Activated T-helper 1 cell treated with anti-CD3 and anti-CD28 coated beads, Interleukin-12 subunit alpha, Interleukin-12 subunit beta, Interleukin-2, Interleukin-4 antibody, amounts not matched to agents 30 ng/mL and 10 ng/mL and 1 ng/mL, durations not matched to agents 14 hours and 24 hours and 36 hours (primary cell): ENCODE measurements at regions of chr16 and their contacts with region 1.

Region 1: GRCh38 chr16:24253192-24253591 is 2.9 kb upstream of the CACNG3 start:
- DNase-seq: peak; percentile 6
- H3K4me3 Mint-ChIP-seq: no peak overlapping the region
- H3K27ac Mint-ChIP-seq: no peak overlapping the region
- H3K4me1 Mint-ChIP-seq: no peaks in the 10 kb centered on the region
- H3K27me3 Mint-ChIP-seq: peaks cover 28% of the 10 kb centered on the region

Region 2: DNA sequence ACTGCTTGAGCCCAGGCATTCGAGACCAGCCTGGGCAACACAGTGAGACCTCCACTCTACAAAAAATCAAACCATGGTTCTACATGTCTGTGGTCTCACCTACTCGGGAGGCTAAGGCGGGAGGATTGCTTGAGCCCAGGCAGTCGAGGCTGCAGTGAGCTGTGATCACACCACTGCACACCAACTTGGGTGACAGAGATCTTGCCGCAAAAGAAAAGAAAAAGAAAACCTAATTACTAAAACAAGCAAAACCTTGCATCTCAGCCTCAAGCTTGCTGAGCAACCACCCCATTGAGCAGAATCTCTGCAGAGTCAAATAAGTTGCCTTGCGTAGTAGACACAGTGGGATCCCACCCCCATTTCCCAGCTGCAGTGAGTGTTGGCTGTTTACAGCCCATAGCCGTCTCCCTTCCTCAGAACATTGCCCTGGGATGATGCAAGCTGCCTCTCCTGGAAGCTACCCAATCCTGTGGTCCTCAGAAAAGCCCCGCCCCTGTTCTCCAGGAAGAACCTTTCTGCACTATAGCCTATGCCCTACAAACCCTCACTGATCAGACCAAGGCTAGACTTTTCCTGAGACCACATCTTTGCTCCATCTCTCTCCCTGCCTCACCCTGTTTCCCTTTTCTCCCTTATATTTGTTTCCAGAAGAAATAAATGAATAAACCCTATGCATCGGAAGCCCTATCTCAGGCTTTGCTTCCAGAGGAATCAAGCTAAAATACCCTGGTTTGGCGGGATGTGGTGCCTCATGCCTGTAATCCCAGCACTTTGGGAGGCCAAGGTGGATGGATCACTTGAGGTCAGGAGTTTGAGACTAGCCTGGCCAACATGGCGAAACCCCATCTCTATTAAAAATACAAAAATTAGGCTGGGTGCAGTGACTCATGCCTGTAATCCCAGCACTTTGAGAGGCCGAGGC is 523.4 kb before region 1 on chr16:
- intact Hi-C with region 1: loop called (anchors 10 kb)
- DNase-seq: no peak
- H3K4me3 Mint-ChIP-seq: no peak overlapping the region
- H3K27ac Mint-ChIP-seq: no peak overlapping the region
- H3K4me1 Mint-ChIP-seq: peaks cover 6% of the 10 kb centered on the region
- H3K27me3 Mint-ChIP-seq: peaks cover 19% of the 10 kb centered on the region

Region 3: GRCh38 chr16:24041826-24042631 is 211.2 kb before region 1 on chr16:
- intact Hi-C with region 1: loop called (anchors 1 kb)
- DNase-seq: peak; percentile 62
- H3K4me3 Mint-ChIP-seq: no peak overlapping the region
- H3K27ac Mint-ChIP-seq: no peak overlapping the region
- H3K4me1 Mint-ChIP-seq: peaks cover 8% of the 10 kb centered on the region
- H3K27me3 Mint-ChIP-seq: no peaks in the 10 kb centered on the region

Region 4: DNA sequence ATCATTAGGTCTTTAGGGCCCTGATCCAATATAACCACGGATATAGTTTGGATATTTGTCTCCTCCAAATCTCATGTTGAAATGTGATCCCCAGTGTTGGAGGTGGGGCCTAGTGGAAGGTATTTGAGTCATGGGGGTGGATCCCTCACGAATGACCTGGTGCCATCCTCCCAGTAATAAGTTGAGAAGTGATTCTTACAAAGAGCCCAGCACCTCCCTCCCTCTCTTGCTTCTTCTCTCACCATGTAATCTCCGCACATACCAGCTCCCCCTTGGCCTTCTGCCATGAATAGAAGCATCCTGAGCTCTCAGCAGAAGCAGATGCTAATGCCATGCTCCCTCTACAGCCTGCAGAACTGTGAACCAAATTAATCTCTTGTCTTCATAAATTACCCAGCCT is 244.2 kb after region 1 on chr16:
- intact Hi-C with region 1: loop called (anchors 2 kb)
- DNase-seq: no peak
- H3K4me3 Mint-ChIP-seq: no peak overlapping the region
- H3K27ac Mint-ChIP-seq: no peak overlapping the region
- H3K4me1 Mint-ChIP-seq: no peaks in the 10 kb centered on the region
- H3K27me3 Mint-ChIP-seq: peaks cover 5% of the 10 kb centered on the region